ENCODE measurements at regions of chr7 and their contacts with region 1.

Region 1: DNA sequence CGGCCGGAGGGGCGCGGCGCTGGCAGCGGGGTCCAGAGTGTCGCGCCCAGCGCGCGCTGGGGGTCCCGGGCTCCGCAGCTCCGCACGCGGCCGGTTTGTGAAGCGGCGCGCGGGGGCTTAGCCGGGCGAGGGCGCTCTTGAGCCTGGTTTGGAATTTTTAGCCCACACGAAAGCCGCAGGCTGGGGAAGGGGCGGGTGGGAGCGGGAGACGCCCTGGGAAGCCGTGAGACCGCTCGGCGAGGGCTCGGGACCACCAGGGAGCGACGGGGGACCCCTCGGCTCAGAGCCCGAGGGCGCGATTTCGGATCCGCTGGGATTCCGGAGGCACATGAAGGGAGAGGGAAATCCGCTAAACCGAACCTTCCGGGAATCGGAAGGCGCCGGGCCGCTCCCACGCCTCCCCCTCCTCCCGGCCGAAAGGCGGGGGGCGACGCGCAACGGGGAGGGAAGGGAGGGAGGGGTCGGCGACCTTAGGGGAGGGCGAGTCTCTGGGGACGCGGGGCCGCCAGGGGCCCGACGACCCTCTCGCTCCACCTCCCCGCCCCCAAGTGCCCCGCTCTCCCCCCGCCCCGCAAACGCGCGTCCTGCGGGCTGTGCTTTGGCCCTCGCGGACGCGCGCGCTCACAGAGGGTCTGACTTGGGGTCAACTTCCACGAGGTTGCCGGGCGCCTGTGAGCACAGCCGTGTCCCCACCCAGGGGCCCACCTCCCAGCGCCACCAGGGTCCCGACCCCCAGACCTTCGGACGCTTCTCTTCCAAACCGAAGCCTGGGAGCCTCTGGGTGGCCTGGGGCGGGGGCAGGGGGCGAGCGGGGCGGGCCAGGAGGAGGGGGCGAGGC is 5.1 kb upstream of the ELFN1 start:
- DNase-seq: peak; percentile 76
- H3K4me3 ChIP-seq: peak overlapping the region; percentile 49
- H3K27ac ChIP-seq: no peak overlapping the region
- H3K4me1 ChIP-seq: peaks cover 14% of the 10 kb centered on the region
- H3K27me3 ChIP-seq: peaks cover 57% of the 10 kb centered on the region
- CTCF ChIP-seq: peak; percentile 80

Region 2: DNA sequence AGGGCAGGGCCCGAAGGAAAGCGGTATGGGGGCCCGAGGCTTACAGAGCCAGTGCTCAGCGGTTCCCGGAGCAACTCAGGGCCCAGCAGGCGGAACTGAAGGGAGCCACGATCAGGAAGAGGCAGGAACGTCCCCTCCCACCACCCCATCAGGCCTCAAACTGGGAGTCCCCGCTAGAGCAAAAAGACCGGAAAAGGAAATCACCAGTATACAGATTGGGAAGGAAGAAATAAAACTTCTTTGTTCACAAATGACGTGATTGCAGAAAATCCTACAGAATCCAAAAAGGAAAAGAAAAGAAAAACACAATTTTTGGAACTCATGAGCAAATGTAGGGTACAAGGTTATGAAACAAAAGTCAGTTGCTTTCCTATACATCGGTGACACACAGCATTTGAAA is 483.3 kb before region 1 on chr7:
- CTCF ChIA-PET with region 1: no interaction called
- POLR2A ChIA-PET with region 1: no interaction called
- intact Hi-C with region 1: no loop called
- DNase-seq: no peak
- H3K4me3 ChIP-seq: no peak overlapping the region
- H3K27ac ChIP-seq: peak overlapping the region; percentile 50
- H3K4me1 ChIP-seq: peaks cover 7% of the 10 kb centered on the region
- H3K27me3 ChIP-seq: peaks cover 17% of the 10 kb centered on the region
- CTCF ChIP-seq: no peak

Region 3: GRCh38 chr7:1644341-1645070 is 20.4 kb before region 1 on chr7:
- CTCF ChIA-PET with region 1: interaction called, 11 read pairs
- POLR2A ChIA-PET with region 1: no interaction called
- intact Hi-C with region 1: no loop called
- DNase-seq: no peak
- H3K4me3 ChIP-seq: no peak overlapping the region
- H3K27ac ChIP-seq: no peak overlapping the region
- H3K4me1 ChIP-seq: peaks cover 23% of the 10 kb centered on the region
- H3K27me3 ChIP-seq: no peaks in the 10 kb centered on the region
- CTCF ChIP-seq: no peak

Region 4: GRCh38 chr7:1725199-1725690 is 60.3 kb after region 1 on chr7:
- CTCF ChIA-PET with region 1: no interaction called
- POLR2A ChIA-PET with region 1: no interaction called
- intact Hi-C with region 1: no loop called
- DNase-seq: peak; percentile 48
- H3K4me3 ChIP-seq: no peak overlapping the region
- H3K27ac ChIP-seq: no peak overlapping the region
- H3K4me1 ChIP-seq: no peaks in the 10 kb centered on the region
- H3K27me3 ChIP-seq: no peaks in the 10 kb centered on the region
- CTCF ChIP-seq: no peak

Region 5: DNA sequence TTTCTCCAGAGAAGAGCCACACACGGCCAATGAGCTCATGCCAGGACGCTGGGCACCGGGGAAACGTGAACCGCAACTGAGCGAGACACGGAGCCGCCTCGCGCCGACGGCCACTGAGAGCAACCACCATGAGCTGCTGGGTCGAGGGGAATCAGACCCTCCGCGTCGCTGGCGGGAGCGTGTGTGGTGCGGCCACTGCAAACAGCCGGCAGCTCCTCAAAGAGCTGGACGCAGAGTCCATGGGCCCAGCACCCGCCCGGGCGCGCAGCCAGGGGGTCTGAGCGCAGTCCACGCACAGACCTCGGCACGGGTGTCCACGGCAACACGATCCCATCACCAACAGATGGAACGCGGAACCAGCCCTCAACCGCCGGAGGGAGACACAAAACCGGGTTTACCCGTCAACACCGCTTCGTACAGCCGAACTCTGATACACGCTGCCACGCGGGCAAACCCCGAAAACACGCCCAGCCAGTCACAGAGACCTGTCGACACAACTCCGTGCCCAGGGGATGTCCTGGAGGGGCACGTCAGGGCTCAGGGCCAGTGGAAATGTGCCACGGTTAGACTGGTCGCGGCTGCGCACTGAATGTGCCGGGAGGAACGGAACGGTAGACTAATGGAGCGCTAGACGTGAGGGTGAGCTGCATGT is 152.3 kb after region 1 on chr7:
- CTCF ChIA-PET with region 1: interaction called, 10 read pairs
- POLR2A ChIA-PET with region 1: no interaction called
- intact Hi-C with region 1: no loop called
- DNase-seq: no peak
- H3K4me3 ChIP-seq: no peak overlapping the region
- H3K27ac ChIP-seq: no peak overlapping the region
- H3K4me1 ChIP-seq: peaks cover 12% of the 10 kb centered on the region
- H3K27me3 ChIP-seq: no peaks in the 10 kb centered on the region
- CTCF ChIP-seq: no peak

Region 6: GRCh38 chr7:2001581-2002442 is 336.9 kb after region 1 on chr7:
- CTCF ChIA-PET with region 1: interaction called, 10 read pairs
- POLR2A ChIA-PET with region 1: no interaction called
- intact Hi-C with region 1: no loop called
- DNase-seq: no peak
- H3K4me3 ChIP-seq: no peak overlapping the region
- H3K27ac ChIP-seq: no peak overlapping the region
- H3K4me1 ChIP-seq: no peaks in the 10 kb centered on the region
- H3K27me3 ChIP-seq: no peaks in the 10 kb centered on the region
- CTCF ChIP-seq: no peak

Region 7: DNA sequence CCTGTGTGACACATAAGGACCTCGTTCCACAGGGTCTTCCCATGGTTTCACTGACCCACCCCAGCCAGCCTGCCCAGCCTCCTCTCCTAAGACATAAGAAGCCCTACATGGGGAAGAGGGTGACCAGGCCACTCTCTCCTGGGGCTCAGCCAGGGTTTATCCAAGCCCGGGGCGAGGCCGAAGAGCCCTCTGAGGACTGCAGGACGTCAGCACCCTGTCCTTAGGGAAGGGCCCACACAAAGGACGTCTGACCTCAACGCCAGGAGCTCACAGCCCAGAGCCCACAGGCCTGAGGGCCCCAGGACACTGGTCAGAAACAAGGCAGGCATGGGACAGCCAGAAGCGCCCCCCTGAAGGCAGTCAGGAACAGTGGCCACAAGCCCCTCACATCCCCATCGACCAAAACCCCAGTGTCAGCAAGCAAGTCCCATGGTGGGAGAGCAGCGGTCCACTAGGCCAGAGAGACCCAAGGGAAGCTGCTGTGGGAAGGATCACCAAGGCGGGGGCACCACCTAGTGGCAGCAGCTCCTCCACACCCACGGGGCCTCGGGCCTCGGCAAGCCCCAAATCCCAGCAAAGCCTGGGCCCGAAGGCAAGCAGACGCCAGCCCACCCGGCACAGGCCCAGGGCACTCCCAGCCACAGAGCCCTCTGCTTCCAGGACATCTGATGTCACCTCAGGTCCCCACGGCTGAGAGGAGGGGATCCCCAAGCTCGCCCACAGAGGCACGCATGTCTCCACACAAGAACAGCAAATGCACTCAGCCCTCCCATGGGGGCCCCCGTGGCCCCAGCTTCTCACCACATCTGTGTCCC is 544.4 kb after region 1 on chr7:
- CTCF ChIA-PET with region 1: no interaction called
- POLR2A ChIA-PET with region 1: no interaction called
- intact Hi-C with region 1: loop called (anchors 10 kb)
- DNase-seq: peak; percentile 69
- H3K4me3 ChIP-seq: no peak overlapping the region
- H3K27ac ChIP-seq: no peak overlapping the region
- H3K4me1 ChIP-seq: no peaks in the 10 kb centered on the region
- H3K27me3 ChIP-seq: no peaks in the 10 kb centered on the region
- CTCF ChIP-seq: peak; percentile 79

Region 8: DNA sequence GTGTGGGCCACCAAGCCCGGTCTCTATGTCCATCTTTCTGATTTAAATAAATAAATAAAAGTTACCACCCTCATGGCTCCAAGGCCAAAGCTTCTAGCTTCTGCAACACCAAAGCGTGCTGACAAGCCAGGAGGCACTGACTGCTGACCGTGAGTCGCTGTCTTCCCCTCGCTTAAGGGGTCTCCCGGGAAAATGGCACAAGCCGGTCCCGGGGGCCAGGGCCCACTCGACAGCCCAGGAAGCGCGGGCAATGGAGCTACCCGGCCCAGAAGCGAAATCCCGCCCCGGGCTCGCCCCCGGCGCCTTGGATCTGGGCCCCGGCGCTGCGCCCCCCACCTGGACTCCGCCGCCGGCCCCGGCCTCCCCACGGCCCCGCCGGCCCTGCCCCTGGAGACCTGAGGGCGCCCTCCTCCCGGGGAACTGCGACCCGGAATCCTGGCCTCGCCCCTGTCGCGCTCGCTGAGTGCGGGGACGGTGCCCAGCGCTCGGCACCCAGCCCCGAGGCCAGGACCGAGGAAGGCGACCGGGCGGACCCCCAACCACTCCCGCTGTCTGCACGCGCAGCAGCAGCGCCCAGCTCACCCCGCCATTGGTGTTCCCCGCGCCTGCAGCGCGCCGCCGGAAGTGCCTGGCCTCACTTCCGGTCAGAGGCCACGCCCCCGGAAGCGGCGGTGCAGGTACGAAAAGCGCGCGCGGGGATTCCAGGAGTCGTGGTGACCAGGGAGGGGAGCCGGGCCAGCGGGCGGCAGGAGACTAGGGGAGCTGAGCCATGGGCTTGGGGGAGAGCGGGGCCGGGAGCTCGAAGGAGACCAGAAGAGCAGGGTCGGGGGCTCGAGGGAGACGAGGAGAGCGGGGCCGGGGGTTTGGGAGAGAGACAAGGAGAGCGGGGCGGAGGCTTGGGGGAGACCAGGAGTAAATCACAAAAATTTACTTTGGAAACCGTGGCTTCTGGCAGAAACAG is 576.9 kb after region 1 on chr7 and contains the starts of genes MRM2 and NUDT1:
- CTCF ChIA-PET with region 1: no interaction called
- POLR2A ChIA-PET with region 1: no interaction called
- intact Hi-C with region 1: no loop called
- DNase-seq: peak; percentile 84
- H3K4me3 ChIP-seq: peak within 1 kb of the TSS; percentile 99
- H3K27ac ChIP-seq: peak within 1 kb of the TSS; percentile 91
- H3K4me1 ChIP-seq: peaks cover 19% of the 10 kb centered on the region
- H3K27me3 ChIP-seq: no peaks in the 10 kb centered on the region
- CTCF ChIP-seq: no peak
- total RNA-seq, gene MRM2: 50.4 and 51.3 TPM in 2 replicates
- total RNA-seq, gene NUDT1: 115 and 117 TPM in 2 replicates

Region 9: DNA sequence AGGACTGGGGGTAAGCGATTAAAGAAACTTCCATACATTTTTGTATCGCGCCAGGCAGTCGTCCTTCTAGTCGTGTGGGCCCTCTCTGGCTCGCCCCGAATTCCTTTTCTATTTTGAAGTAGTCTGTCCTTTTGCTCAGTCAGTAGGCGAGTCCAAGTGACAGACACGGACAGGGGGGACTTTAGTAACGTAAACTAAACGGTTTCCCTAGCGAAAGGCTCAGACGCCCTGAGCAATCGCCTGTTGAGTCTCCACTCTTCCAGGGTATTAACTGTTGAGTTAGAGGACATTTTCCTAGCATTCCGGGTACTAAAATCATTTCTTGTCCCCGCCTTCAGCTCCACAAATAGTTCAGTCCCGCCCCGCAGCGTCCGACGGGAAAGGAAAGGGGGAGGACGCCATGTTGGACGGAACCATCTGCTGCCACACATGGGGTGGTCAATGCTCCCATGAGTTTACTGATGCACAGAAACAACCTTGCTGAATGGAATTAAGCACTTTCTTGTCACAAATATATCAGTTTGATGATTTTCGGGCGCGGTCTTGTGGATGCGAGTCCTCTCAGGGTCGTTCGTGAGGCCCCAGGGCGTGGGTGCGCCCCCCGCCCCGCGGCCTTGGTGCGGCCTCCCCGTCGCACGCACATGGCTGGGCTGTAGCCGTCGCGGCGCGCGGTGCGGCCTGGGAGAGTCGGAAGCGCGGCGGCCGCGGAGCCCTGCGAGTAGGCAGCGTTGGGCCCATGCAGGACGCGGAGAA is 689.4 kb after region 1 on chr7 and contains the start of gene EIF3B:
- CTCF ChIA-PET with region 1: no interaction called
- POLR2A ChIA-PET with region 1: no interaction called
- intact Hi-C with region 1: loop called (anchors 10 kb)
- DNase-seq: peak; percentile 96
- H3K4me3 ChIP-seq: peak within 1 kb of the TSS; percentile 98
- H3K27ac ChIP-seq: peak within 1 kb of the TSS; percentile 100
- H3K4me1 ChIP-seq: peaks cover 38% of the 10 kb centered on the region
- H3K27me3 ChIP-seq: no peaks in the 10 kb centered on the region
- CTCF ChIP-seq: no peak
- total RNA-seq, gene EIF3B: 356 and 364 TPM in 2 replicates

Measured in A673 (cell line).